ENCODE measurements at regions of chr20 and their contacts with region 1.

Region 1: GRCh38 chr20:10357974-10358373 is 76.0 kb downstream of the MKKS start:
- DNase-seq: peak in 1 of 2 experiments; percentile 29
- ATAC-seq: no peak
- H3K4me3 ChIP-seq: no peak overlapping the region
- H3K27ac ChIP-seq: peak overlapping the region; percentile 92 to 93
- H3K4me1 ChIP-seq: peaks cover 36% of the 10 kb centered on the region
- CTCF ChIP-seq: peak; percentile 22; the same call in 1 of the 3 replicates
- EP300 ChIP-seq: no peak
- POLR2A ChIP-seq: no peak
- RAD21 ChIP-seq: peak; percentile 30 to 50; a peak in 2 of 5 replicates

Region 2: GRCh38 chr20:10249048-10249770 is 108.8 kb before region 1 on chr20:
- CTCF ChIA-PET with region 1: interaction called, 3 read pairs
- POLR2A ChIA-PET with region 1: interaction called, 14 read pairs
- DNase-seq: peak; percentile 51 to 94
- ATAC-seq: peak; percentile 35 to 58; a peak in 4 of 6 replicates
- H3K4me3 ChIP-seq: no peak overlapping the region
- H3K27ac ChIP-seq: peak overlapping the region; percentile 89 to 91
- H3K4me1 ChIP-seq: peaks cover 78% of the 10 kb centered on the region
- CTCF ChIP-seq: no peak
- EP300 ChIP-seq: peak; percentile 85 to 92; a peak in 3 of 5 replicates
- POLR2A ChIP-seq: no peak
- RAD21 ChIP-seq: peak; percentile 37 to 59

Region 3: GRCh38 chr20:10306440-10307358 is 51.3 kb before region 1 on chr20:
- CTCF ChIA-PET with region 1: interaction called, 4 read pairs
- POLR2A ChIA-PET with region 1: interaction called, 10 read pairs
- DNase-seq: no peak
- ATAC-seq: peak in 1 of 2 experiments; percentile 56; a peak in 3 of 6 replicates
- H3K4me3 ChIP-seq: no peak overlapping the region
- H3K27ac ChIP-seq: peak overlapping the region; percentile 76 to 83
- H3K4me1 ChIP-seq: peaks cover 81% of the 10 kb centered on the region
- CTCF ChIP-seq: no peak
- EP300 ChIP-seq: peak; percentile 50 to 64; a peak in 2 of 5 replicates
- POLR2A ChIP-seq: no peak
- RAD21 ChIP-seq: 0 out of 5 replicates have a peak, but pooled peaks of 1 of the 2 experiments have one; percentile 18

Region 4: GRCh38 chr20:10412591-10413408 is 54.8 kb after region 1 on chr20:
- CTCF ChIA-PET with region 1: interaction called, 15 read pairs
- POLR2A ChIA-PET with region 1: interaction called, 4 read pairs
- DNase-seq: peak; percentile 43 to 55
- ATAC-seq: peak; percentile 69 to 82; a peak in 5 of 6 replicates
- H3K4me3 ChIP-seq: no peak overlapping the region
- H3K27ac ChIP-seq: peak overlapping the region; percentile 63 to 82
- H3K4me1 ChIP-seq: peaks cover 83% of the 10 kb centered on the region
- CTCF ChIP-seq: peak; percentile 78
- EP300 ChIP-seq: no peak
- POLR2A ChIP-seq: no peak
- RAD21 ChIP-seq: peak; percentile 69 to 76